GM10248 (cell line): ENCODE measurements at regions of chr11 and their contacts with region 1.

Region 1: DNA sequence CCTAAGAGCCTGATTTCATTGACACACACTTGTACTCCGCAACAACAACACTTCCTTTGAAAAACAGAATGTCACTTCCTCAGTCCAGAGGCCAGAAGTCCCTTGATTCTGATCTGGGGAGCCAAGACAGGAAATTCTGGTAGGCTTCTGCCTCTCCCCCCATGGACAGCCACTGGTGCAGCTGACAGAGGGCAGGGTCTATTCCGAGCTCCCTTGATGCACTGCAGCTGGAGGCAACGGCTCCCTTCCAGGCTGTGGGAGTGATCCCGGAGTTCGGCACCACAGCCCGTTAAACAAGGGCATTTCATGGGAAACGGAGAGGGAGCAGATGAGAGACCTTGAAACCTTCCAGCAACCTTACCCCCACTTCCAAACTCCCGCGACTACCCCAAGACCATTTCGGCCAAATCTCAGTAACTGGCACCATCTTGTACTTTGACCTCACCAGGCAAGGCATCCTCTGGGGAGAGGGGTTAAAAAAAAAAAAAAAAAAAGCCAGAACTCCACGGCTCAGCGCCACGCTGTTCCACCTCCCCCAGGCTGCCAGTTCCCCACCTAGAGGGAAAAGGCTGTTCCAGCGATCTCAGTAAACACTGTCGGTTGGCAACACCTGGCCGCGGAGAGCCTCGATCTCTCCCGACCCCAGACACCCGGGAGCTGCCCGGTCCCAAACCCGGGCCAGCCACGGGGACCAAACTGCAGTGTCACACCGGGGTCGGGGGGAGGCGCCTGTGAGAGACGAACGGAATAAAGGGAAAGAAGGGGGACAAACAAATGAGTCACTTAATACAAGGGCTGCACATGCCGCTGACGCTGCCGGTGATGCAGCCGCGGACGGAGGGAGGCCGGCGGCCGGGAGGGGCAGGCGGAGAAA is 1.1 kb downstream of the GAB2 start:
- DNase-seq: peak; percentile 84
- CTCF ChIP-seq: peak; percentile 56

Region 2: GRCh38 chr11:78228467-78228866 is 188.1 kb before region 1 on chr11:
- CTCF ChIA-PET with region 1: interaction called, 49 read pairs
- POLR2A ChIA-PET with region 1: no interaction called
- DNase-seq: peak; percentile 75
- CTCF ChIP-seq: peak; percentile 60

Region 3: GRCh38 chr11:78432058-78432515 is 15.5 kb after region 1 on chr11:
- CTCF ChIA-PET with region 1: interaction called, 129 read pairs
- POLR2A ChIA-PET with region 1: interaction called, 3 read pairs
- DNase-seq: no peak
- CTCF ChIP-seq: peak; percentile 32

Region 4: DNA sequence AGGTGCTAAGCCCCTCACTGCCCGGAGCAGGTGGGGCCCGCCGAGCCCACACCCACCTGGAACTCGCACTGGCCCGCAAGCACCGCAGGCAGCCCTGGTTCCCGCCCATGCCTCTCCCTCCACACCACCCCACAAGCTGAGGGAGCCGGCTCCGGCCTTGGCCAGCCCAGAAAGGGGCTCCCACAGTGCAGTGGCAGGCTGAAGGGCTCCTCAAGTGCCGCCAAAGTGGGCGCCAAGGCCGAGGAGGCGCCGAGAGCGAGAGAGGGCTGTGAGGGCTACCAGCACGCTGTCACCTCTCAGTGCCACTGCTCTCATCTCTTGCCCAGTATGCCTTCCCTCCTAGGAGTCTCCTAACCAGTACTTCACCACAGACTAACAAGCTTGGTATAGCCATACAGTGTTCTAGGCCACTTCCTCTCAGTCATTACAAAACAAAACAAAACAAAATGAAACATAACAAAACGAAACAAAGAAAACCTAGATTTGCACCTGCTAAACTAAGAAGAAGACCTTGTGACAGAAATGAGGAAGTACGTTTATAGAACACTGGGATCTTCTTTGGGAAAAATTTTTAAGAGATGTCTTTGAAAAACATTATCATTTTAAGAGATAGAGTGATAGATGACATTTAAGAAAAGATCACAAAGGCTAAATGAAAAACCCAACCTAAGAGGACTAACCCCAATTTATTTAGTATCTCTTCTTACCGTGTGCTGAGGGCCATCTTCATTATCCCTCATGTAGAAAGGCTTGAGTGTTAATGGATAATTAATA is 48.8 kb after region 1 on chr11:
- CTCF ChIA-PET with region 1: interaction called, 10 read pairs
- POLR2A ChIA-PET with region 1: no interaction called
- DNase-seq: peak; percentile 84
- CTCF ChIP-seq: no peak